ENCODE measurements at regions of chr22 and their contacts with region 1.

Region 1: DNA sequence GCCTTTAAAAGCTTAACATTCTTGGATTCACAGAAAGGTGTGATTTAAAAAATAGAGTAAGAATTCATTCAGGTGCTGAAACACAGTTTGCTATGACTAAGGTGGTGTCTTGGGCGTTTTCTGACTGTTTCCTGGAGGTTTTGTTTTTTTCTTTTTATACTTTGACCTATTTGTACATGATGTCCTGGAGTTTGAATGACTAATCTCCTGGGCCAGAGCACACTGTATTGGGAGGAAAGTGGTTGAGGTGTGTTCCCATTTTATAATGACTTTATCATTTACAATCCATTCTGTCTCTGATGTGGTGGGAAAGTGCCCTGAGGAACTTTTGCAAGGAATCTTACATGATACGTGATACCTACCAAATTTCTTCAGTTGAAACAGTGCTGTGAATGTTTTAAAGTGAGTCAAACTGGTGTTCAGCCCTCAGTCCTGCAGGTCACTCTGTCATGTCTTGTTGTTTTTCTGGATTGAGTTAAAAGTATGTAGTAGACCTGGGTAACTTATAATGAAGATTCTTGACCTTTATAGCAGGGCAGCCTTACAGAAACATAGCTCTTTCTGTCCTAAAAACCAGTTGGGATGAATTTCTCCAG is 80.8 kb downstream of the TNRC6B start:
- DNase-seq: no peak
- ATAC-seq: no peak
- H3K4me3 ChIP-seq: no peak overlapping the region
- H3K27ac ChIP-seq: no peak overlapping the region
- H3K4me1 ChIP-seq: no peaks in the 10 kb centered on the region
- H3K27me3 ChIP-seq: no peaks in the 10 kb centered on the region
- CTCF ChIP-seq: no peak

Region 2: DNA sequence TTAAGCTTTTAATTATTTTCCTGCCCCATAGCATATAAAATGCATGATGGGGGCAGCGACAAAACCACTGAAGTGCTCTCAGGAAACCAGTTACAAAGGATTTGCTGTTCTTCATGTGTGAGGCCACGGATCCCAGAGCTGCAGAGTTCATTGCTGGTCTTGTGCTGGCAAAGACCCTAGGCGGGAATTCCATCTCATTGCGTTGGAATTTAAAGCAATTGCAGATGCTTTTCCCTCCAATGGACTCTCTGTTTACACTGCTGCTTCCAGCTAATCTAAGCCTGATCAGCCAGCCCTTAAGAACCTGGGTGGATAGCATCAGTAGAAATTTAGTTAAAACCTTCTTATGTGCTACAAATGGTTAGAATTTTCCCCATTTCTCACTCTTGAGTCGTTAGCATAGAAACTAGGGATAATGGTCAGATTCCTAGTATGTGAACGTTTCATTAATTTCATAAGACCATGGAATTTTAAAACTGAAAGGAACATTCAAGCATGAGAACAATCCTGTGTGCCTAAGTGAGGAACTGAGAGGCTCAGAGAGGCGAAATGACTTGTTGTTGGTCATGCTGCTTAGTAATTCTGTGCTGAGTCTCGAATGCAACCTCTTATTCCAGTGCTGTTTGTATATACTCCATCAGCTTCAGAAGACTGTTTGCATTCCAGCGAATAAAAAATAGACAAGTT is 51.7 kb after region 1 on chr22:
- CTCF ChIA-PET with region 1: no interaction called
- POLR2A ChIA-PET with region 1: interaction called, 11 read pairs
- in situ Hi-C with region 1: no loop called
- intact Hi-C with region 1: no loop called
- DNase-seq: no peak
- ATAC-seq: no peak
- H3K4me3 ChIP-seq: no peak overlapping the region
- H3K27ac ChIP-seq: no peak overlapping the region
- H3K4me1 ChIP-seq: no peaks in the 10 kb centered on the region
- H3K27me3 ChIP-seq: no peaks in the 10 kb centered on the region
- CTCF ChIP-seq: no peak

Measured in Panc1 (cell line).